CD4-positive, alpha-beta memory T cell (primary cell): ENCODE measurements at regions of chr6 and their contacts with region 1.

Region 1: GRCh38 chr6:46129629-46130511 is at the start of gene ENPP4:
- DNase-seq: peak; percentile 91 to 98 (median 93)
- H3K4me3 ChIP-seq: peak within 1 kb of the TSS; percentile 86 to 97
- H3K4me3 Mint-ChIP-seq: peak within 1 kb of the TSS; percentile 93 to 98 (median 98)
- H3K27ac ChIP-seq: peak within 1 kb of the TSS; percentile 63
- H3K27ac Mint-ChIP-seq: peak within 1 kb of the TSS; percentile 89 to 97 (median 95)
- H3K4me1 ChIP-seq: peaks cover 30% of the 10 kb centered on the region
- H3K4me1 Mint-ChIP-seq: peaks cover 31 to 56% (median 42%) of the 10 kb centered on the region in 4 donors
- H3K27me3 ChIP-seq: no peaks in the 10 kb centered on the region
- H3K27me3 Mint-ChIP-seq: no peaks in the 10 kb centered on the region
- total RNA-seq, gene ENPP4: 10.9 to 11.1 TPM

Region 2: DNA sequence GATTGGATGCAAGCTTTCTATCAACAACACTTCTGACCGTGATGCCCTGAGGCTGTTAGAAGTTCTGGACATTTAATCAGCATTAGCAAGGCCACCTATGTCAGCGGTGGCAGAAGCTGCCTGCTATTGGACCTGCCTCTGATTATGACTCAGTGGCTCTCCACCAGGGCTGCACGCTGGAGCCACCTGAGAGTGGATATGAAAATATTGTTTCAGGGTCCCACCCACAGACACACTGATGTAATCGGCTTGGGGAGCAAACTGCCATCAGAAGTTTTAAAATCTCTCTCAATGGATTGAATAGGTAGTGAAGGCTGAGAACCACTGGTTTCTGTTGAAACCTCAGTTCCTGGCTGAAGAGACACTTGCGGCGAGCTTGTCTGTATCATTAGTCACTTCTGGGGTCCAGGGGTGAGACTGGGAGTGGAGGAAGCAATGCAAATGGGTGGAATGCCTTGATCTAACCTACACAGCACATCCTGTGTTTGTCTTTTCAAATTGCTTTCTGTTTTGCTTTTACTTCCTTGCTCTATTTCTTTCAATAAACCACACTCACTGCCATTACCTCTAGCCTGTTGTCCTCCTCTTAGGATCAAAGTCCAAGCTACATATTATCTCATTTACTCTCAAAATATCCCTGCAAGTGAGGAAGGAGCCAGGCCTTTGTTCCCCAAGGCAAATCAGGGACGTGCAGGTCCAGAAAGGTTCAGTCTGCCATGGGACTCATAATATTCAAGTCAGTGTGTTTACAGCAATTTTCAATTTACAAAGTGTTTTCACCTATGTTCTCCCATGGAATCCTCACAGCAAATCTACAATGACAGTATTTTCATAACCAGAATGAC is 118.4 kb before region 1 on chr6:
- CTCF ChIA-PET with region 1: interaction called, 4 read pairs
- POLR2A ChIA-PET with region 1: interaction called, 15 read pairs
- intact Hi-C with region 1: loop called (anchors 1 kb)
- DNase-seq: peak; percentile 72 to 92 (median 83)
- H3K4me3 ChIP-seq: peak overlapping the region; percentile 32 to 42
- H3K4me3 Mint-ChIP-seq: peak overlapping the region; percentile 67 to 99 (median 84)
- H3K27ac ChIP-seq: peak overlapping the region; percentile 71
- H3K27ac Mint-ChIP-seq: peak overlapping the region; percentile 95 to 98 (median 97)
- H3K4me1 ChIP-seq: peaks cover 56% of the 10 kb centered on the region
- H3K4me1 Mint-ChIP-seq: peaks cover 51 to 74% (median 62%) of the 10 kb centered on the region in 4 donors
- H3K27me3 ChIP-seq: no peaks in the 10 kb centered on the region
- H3K27me3 Mint-ChIP-seq: no peaks in the 10 kb centered on the region

Region 3: DNA sequence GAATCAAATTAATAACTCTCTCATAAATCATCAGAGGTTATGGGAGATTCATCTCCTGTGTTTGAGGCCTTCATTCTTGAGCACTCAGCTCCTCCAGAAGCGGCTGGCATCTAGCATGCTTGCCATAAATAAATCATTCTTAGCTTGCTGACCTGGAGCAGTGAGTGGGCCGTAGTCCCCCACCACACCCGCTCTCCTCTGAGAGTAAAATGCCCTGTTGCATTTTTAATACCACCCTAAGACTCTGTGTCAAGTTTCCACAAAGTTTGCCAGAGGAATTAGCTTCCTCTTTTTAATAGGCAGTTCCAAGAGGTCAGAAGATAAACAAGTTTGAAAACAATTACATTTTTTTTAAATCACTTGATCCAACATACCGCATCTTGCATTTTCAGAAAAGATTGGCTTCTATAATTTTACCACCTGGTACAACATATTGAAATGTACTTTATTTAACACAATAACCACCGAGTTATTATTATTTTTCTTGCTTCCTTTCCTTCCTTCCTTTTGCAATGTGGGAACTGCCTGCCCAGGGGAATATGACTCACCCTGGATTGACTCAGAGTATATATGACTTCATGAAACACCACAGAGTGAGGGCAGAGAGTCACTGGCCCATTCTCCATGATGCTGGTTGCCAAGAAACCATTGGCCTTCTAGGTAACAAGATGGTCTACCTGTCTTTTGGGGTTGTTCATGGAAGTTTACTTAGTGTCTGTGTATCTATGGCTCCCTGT is 84.8 kb before region 1 on chr6:
- CTCF ChIA-PET with region 1: no interaction called
- POLR2A ChIA-PET with region 1: no interaction called
- intact Hi-C with region 1: no loop called
- DNase-seq: no peak
- H3K4me3 ChIP-seq: no peak overlapping the region
- H3K4me3 Mint-ChIP-seq: no peak overlapping the region
- H3K27ac ChIP-seq: no peak overlapping the region
- H3K27ac Mint-ChIP-seq: no peak overlapping the region
- H3K4me1 ChIP-seq: no peaks in the 10 kb centered on the region
- H3K4me1 Mint-ChIP-seq: peaks cover 0 to 3% (median 0%) of the 10 kb centered on the region in 4 donors
- H3K27me3 ChIP-seq: no peaks in the 10 kb centered on the region
- H3K27me3 Mint-ChIP-seq: peaks cover 0 to 3% of the 10 kb centered on the region in 2 donors

Region 4: DNA sequence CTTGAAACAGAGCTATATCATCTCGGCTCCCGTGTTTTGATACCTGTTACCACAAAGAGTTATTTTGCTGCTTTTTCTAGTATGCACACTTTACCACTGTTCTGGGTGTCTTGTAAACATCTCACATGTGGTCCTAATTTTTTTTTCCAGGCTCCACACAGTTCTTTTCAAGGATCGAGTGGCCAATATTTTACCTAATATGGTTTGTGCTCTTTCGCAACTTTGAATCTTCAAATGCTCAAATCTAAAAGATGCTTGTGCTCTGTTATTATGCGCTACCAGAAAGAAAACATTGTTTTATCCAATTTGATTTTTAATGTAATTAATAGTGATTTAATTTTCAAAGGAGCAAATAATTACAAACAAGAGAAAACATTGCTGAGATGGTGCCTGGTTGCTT is 30.2 kb after region 1 on chr6:
- CTCF ChIA-PET with region 1: no interaction called
- POLR2A ChIA-PET with region 1: no interaction called
- intact Hi-C with region 1: no loop called
- DNase-seq: no peak
- H3K4me3 ChIP-seq: no peak overlapping the region
- H3K4me3 Mint-ChIP-seq: no peak overlapping the region
- H3K27ac ChIP-seq: no peak overlapping the region
- H3K27ac Mint-ChIP-seq: no peak overlapping the region
- H3K4me1 ChIP-seq: no peaks in the 10 kb centered on the region
- H3K4me1 Mint-ChIP-seq: no peaks in the 10 kb centered on the region
- H3K27me3 ChIP-seq: no peaks in the 10 kb centered on the region
- H3K27me3 Mint-ChIP-seq: peaks cover 7 to 9% of the 10 kb centered on the region in 2 donors

Region 5: DNA sequence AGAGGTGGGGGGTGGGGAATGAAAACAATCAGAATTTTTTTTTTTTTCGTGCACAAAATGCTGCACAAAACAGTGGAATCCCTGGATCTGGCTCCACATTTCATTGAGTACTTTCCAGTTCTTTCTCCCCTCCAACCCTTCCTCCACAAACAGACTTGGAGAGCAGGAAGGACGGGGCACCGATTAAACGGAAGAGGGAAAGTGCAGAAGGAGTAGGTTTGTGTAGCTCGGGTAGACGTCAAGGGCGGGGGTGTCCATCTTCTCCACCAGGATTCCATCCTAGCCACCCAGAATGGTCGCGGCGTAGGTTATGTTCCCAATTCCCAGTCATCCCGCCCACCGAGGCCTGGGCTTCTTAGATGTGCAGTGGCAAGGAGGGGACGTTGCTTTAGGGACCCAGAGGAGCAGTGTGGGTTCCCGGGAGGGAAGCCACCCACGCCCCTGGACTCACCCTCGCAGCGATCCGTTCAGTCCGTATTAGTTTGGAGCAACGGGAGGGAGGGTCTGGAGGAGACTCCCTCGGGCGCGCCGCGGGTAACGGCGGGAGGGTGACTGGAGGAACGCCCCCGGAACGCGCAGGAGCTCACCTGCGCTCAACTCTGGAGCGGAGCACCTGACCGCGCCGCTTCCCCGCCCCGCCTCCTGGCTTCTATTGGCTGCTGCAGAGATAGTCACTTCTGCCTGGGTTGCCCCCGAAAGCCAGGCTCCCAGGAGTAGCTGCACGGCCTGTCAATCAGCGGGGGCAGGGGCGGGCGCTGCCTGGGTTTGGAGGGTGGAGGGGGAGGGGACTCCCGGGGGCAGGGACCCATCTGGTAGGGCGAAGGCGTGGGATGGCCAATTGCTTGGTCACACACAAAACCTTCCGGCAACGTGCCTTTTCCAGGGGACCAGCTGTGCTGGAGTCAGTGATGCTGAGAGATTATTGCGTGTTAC is 40.8 kb after region 1 on chr6 and contains the start of gene ENPP5:
- CTCF ChIA-PET with region 1: interaction called, 4 read pairs
- POLR2A ChIA-PET with region 1: interaction called, 10 read pairs
- intact Hi-C with region 1: loop called (anchors 2 kb)
- DNase-seq: peak; percentile 53 to 78 (median 61)
- H3K4me3 ChIP-seq: peak within 1 kb of the TSS in 1 of 2 donors; percentile 51
- H3K4me3 Mint-ChIP-seq: peak within 1 kb of the TSS; percentile 78 to 87 (median 86)
- H3K27ac ChIP-seq: no peak within 1 kb of the TSS
- H3K27ac Mint-ChIP-seq: peak within 1 kb of the TSS in 6 of 7 donors; percentile 1 to 69 (median 52)
- H3K4me1 ChIP-seq: peaks cover 11% of the 10 kb centered on the region
- H3K4me1 Mint-ChIP-seq: peaks cover 11 to 31% (median 20%) of the 10 kb centered on the region in 4 donors
- H3K27me3 ChIP-seq: no peaks in the 10 kb centered on the region
- H3K27me3 Mint-ChIP-seq: peaks cover 9 to 28% of the 10 kb centered on the region in 2 donors
- total RNA-seq, gene ENPP5: 0.89 to 1.2 TPM

Region 6: GRCh38 chr6:47477497-47478232 is 1347.8 kb after region 1 on chr6 and contains the start of gene CD2AP:
- CTCF ChIA-PET with region 1: no interaction called
- POLR2A ChIA-PET with region 1: no interaction called
- intact Hi-C with region 1: loop called (anchors 5 kb)
- DNase-seq: peak; percentile 90 to 94 (median 92)
- H3K4me3 ChIP-seq: peak within 1 kb of the TSS; percentile 74 to 88
- H3K4me3 Mint-ChIP-seq: peak within 1 kb of the TSS; percentile 92 to 100 (median 97)
- H3K27ac ChIP-seq: peak within 1 kb of the TSS; percentile 89
- H3K27ac Mint-ChIP-seq: peak within 1 kb of the TSS; percentile 96 to 99 (median 98)
- H3K4me1 ChIP-seq: peaks cover 36% of the 10 kb centered on the region
- H3K4me1 Mint-ChIP-seq: peaks cover 22 to 47% (median 33%) of the 10 kb centered on the region in 4 donors
- H3K27me3 ChIP-seq: no peaks in the 10 kb centered on the region
- H3K27me3 Mint-ChIP-seq: no peaks in the 10 kb centered on the region
- total RNA-seq, gene CD2AP: 25.7 to 25.8 TPM